Caco-2 (cell line): ENCODE measurements at regions of chr1 and their contacts with region 1.

Region 1: GRCh38 chr1:47192458-47193384 is 2.9 kb upstream of the PDZK1IP1 start:
- DNase-seq: peak; percentile 87 to 88
- H3K4me3 ChIP-seq: peak overlapping the region; percentile 38
- H3K4me3 Mint-ChIP-seq: peak overlapping the region; percentile 94
- H3K27ac Mint-ChIP-seq: peak overlapping the region; percentile 98
- H3K4me1 ChIP-seq: peaks cover 55% of the 10 kb centered on the region
- H3K4me1 Mint-ChIP-seq: peaks cover 31% of the 10 kb centered on the region
- H3K27me3 ChIP-seq: no peaks in the 10 kb centered on the region
- H3K27me3 Mint-ChIP-seq: no peaks in the 10 kb centered on the region
- CTCF ChIP-seq: peak; percentile 80 to 84

Region 2: DNA sequence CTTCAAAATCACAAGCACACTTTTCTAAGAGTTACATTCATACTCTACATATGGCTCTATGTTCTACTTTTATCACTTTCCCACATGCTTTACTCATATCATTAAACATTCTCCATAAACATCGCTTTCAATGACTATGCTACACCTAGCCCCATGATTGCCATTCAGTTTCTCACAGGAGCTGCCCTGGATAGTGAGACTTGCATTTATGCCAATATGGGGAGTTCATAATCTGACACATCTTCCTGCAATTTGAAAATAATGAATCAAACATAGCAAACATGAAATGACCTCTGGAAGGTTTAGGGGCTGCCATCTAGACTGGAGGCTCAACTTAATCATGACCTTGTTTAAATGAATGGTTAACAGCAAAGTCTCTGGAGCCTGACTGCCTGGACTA is 64.5 kb before region 1 on chr1:
- CTCF ChIA-PET with region 1: no interaction called
- POLR2A ChIA-PET with region 1: no interaction called
- intact Hi-C with region 1: no loop called
- DNase-seq: no peak
- H3K4me3 ChIP-seq: no peak overlapping the region
- H3K4me3 Mint-ChIP-seq: no peak overlapping the region
- H3K27ac Mint-ChIP-seq: no peak overlapping the region
- H3K4me1 ChIP-seq: no peaks in the 10 kb centered on the region
- H3K4me1 Mint-ChIP-seq: no peaks in the 10 kb centered on the region
- H3K27me3 ChIP-seq: no peaks in the 10 kb centered on the region
- H3K27me3 Mint-ChIP-seq: peaks cover 2% of the 10 kb centered on the region
- CTCF ChIP-seq: no peak

Region 3: DNA sequence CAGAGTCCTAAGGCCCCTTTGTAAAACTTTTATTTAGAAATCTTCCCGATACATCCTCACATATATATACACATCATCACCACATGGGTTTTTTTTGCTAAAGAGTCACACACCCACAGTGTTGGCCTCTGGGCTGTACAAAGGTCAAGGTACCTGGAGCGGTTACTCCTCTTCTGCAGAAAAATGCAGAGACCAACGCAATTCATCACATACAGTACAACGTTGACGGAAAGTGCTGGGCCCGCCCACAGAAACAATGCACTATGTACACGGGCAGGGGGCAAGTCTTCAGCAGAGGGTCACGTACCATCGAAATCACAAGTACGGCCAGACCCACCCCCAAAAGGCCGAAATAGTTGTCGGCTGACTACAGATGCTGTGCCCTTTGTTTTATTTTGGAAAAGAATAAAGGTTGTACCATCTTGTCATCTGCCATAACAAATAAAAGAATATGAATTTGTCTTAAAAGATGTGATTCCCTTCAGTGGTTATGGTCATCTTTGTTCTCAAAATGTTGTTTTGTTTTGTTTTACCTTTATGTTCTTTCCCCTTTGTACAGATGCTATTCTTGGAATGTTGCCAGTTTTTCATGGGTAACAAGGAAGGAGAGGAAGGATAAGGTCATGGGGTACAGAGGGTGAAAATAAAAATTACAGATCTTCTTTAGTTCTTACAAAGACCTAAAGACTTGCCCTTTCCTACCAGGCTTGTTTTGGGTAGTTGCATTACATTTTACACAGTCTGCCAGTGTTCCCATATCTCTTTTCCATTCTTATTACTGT is 23.7 kb after region 1 on chr1:
- CTCF ChIA-PET with region 1: interaction called, 3 read pairs
- POLR2A ChIA-PET with region 1: no interaction called
- intact Hi-C with region 1: loop called (anchors 1 kb)
- DNase-seq: peak; percentile 63 to 76
- H3K4me3 ChIP-seq: no peak overlapping the region
- H3K4me3 Mint-ChIP-seq: peak overlapping the region; percentile 53
- H3K27ac Mint-ChIP-seq: peak overlapping the region; percentile 88
- H3K4me1 ChIP-seq: peaks cover 16% of the 10 kb centered on the region
- H3K4me1 Mint-ChIP-seq: peaks cover 14% of the 10 kb centered on the region
- H3K27me3 ChIP-seq: no peaks in the 10 kb centered on the region
- H3K27me3 Mint-ChIP-seq: no peaks in the 10 kb centered on the region
- CTCF ChIP-seq: no peak

Region 4: GRCh38 chr1:47257224-47257623 is 64.5 kb after region 1 on chr1:
- CTCF ChIA-PET with region 1: interaction called, 21 read pairs
- POLR2A ChIA-PET with region 1: no interaction called
- intact Hi-C with region 1: loop called (anchors 2 kb)
- DNase-seq: no peak
- H3K4me3 ChIP-seq: no peak overlapping the region
- H3K4me3 Mint-ChIP-seq: no peak overlapping the region
- H3K27ac Mint-ChIP-seq: no peak overlapping the region
- H3K4me1 ChIP-seq: peaks cover 26% of the 10 kb centered on the region
- H3K4me1 Mint-ChIP-seq: no peaks in the 10 kb centered on the region
- H3K27me3 ChIP-seq: no peaks in the 10 kb centered on the region
- H3K27me3 Mint-ChIP-seq: no peaks in the 10 kb centered on the region
- CTCF ChIP-seq: no peak

Region 5: DNA sequence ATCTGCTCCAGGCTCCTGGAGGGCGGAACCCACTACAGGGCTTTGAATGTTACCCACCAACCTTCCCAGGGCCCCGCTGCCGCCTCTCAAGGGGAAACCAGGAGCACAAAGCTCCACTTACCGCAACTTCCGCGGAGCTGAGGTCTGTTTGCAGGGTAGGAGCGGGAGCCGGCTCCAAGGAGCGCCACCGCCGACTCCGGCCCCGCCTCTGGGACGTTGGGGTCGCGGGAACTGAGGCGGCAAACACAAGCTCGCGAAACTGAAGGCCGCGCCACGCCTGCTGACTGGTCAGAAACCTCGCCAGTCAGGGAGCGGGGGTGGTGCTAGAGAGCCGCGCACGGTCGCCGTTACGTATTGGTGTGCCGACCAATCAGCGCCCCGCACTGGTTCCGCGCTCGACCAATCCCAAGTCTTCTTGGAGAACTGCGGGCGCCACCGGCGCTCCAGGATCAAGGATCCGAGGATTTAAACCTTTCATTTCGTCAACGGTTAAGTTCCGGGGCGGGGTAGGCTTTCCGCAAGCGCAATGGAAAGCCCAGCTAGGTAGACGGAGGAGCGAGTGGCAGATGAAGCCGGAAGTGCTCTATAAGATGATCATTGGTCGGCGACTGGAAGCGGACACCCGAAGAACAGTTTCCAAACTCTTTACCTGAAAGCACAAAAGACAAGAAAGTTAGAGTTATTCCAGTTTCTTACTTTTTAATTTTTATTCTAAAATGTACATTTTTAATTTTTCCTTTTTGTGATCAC is 121.4 kb after region 1 on chr1 and contains the start of gene STIL:
- CTCF ChIA-PET with region 1: interaction called, 5 read pairs
- POLR2A ChIA-PET with region 1: interaction called, 8 read pairs
- intact Hi-C with region 1: loop called (anchors 2 kb)
- DNase-seq: peak; percentile 97 to 99
- H3K4me3 ChIP-seq: peak within 1 kb of the TSS; percentile 61
- H3K4me3 Mint-ChIP-seq: peak within 1 kb of the TSS; percentile 92
- H3K27ac Mint-ChIP-seq: peak within 1 kb of the TSS; percentile 99
- H3K4me1 ChIP-seq: no peaks in the 10 kb centered on the region
- H3K4me1 Mint-ChIP-seq: no peaks in the 10 kb centered on the region
- H3K27me3 ChIP-seq: no peaks in the 10 kb centered on the region
- H3K27me3 Mint-ChIP-seq: no peaks in the 10 kb centered on the region
- CTCF ChIP-seq: no peak
- total RNA-seq, gene STIL: 25.9 and 26.4 TPM in 2 replicates

Region 6: GRCh38 chr1:47378147-47378546 is 185.4 kb after region 1 on chr1:
- CTCF ChIA-PET with region 1: no interaction called
- POLR2A ChIA-PET with region 1: no interaction called
- intact Hi-C with region 1: loop called (anchors 2 kb)
- DNase-seq: peak in 1 of 2 experiments; percentile 50
- H3K4me3 ChIP-seq: no peak overlapping the region
- H3K4me3 Mint-ChIP-seq: peak overlapping the region; percentile 29
- H3K27ac Mint-ChIP-seq: no peak overlapping the region
- H3K4me1 ChIP-seq: peaks cover 49% of the 10 kb centered on the region
- H3K4me1 Mint-ChIP-seq: peaks cover 10% of the 10 kb centered on the region
- H3K27me3 ChIP-seq: no peaks in the 10 kb centered on the region
- H3K27me3 Mint-ChIP-seq: no peaks in the 10 kb centered on the region
- CTCF ChIP-seq: no peak